GM23248 (cell line): ENCODE measurements at regions of chr2 and their contacts with region 1.

Region 1: DNA sequence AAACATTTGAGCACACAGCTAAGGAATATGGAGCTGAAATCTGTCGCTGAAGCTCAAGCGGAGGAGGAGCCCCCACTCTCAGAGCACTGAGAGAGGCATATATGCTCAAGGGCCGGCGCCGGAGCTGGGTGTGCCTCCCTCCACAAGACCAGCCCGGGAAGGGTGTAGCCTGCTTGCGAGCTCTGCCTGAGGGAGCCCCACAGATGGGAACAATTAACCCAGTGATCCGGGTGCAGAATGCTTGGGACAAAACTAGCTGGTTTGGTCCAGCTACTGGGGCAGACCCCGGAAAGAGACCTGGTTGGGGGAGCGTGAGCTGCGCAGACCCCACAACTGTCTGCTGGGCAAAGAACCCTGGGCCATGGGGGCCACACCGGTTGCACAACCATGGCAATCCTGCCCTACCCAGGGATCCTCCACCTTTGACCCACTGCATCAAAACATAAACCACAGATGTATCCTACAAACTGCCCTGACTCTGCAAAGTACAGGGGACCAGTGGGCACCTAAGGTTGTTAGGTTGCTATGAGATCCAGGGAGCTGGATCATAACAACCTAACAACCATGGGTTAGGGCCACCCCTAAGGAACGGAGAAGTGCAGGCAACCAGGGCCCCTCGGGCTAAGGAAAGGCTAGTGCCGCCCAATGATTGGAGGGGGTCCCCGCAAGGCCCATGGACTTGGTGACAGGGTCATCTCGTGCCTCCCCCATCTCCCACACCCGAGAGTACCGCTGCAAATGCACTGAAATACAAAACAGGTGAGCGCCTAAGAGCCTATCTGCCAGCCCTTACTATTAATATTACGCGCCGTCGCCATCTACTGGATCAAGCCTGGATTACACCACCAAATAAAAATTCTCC is 53.4 kb upstream of the SCN1A start:
- DNase-seq: peak; percentile 73
- H3K4me3 ChIP-seq: no peak overlapping the region
- H3K27ac ChIP-seq: no peak overlapping the region
- H3K4me1 ChIP-seq: no peaks in the 10 kb centered on the region
- H3K27me3 ChIP-seq: no peaks in the 10 kb centered on the region

Region 2: DNA sequence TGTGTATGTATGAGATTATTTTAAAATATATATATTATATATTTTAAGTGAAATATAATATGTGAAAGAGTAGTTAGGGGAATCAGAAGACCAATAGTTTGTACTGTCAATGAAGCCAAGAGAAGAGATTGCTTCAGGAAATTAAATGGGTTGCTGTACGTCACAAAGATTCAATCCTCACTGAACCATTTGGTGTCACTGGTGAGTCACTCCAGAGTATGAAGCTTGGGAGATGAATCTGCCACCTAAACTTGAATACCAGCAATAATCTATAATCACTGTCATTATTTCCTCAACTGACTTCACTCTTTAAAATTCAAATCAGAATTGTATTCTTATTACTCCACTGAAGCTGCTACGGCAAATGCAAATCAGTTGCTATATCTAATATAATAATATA is 236.5 kb after region 1 on chr2:
- in situ Hi-C with region 1: loop called (anchors 25 kb)
- DNase-seq: peak; percentile 74
- H3K4me3 ChIP-seq: no peak overlapping the region
- H3K27ac ChIP-seq: no peak overlapping the region
- H3K4me1 ChIP-seq: peaks cover 10% of the 10 kb centered on the region
- H3K27me3 ChIP-seq: no peaks in the 10 kb centered on the region

Region 3: GRCh38 chr2:166516712-166517303 is 335.6 kb after region 1 on chr2:
- in situ Hi-C with region 1: loop called (anchors 10 kb)
- DNase-seq: peak; percentile 48
- H3K4me3 ChIP-seq: no peak overlapping the region
- H3K27ac ChIP-seq: no peak overlapping the region
- H3K4me1 ChIP-seq: no peaks in the 10 kb centered on the region
- H3K27me3 ChIP-seq: no peaks in the 10 kb centered on the region

Region 4: GRCh38 chr2:166825914-166826313 is 644.7 kb after region 1 on chr2:
- in situ Hi-C with region 1: no loop called
- DNase-seq: no peak
- H3K4me3 ChIP-seq: no peak overlapping the region
- H3K27ac ChIP-seq: no peak overlapping the region
- H3K4me1 ChIP-seq: no peaks in the 10 kb centered on the region
- H3K27me3 ChIP-seq: no peaks in the 10 kb centered on the region